Endothelial cell of umbilical vein (primary cell): ENCODE measurements at regions of chr10 and their contacts with region 1.

Region 1: DNA sequence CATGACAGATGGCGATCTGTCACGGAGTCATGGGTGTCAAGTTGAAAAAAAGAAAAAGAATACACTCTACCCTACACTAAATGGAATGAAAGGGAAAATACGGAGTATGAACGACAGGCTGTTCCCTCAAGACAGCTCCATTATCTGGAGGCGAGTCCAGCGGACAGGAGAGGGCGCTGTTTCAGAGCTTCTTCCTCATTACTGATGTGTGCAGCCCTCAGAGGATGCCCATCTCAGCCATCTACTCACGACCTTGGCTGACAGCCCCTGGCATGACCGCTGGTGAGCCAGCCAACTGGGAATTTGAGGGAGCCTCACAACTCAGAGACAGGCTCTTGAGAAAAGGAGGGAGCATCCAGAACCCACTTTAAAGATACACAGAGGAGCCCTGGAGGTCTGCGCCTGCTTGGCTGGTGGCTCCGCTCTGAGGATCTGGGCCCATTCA is 49.6 kb upstream of the SMNDC1 start:
- DNase-seq: peak; percentile 86
- H3K4me3 ChIP-seq: no peak overlapping the region
- H3K27ac ChIP-seq: peak overlapping the region; percentile 34
- H3K4me1 ChIP-seq: peaks cover 24% of the 10 kb centered on the region
- H3K27me3 ChIP-seq: no peaks in the 10 kb centered on the region
- CTCF ChIP-seq: peak; percentile 84 to 96
- POLR2A ChIP-seq: no peak

Region 2: GRCh38 chr10:110129490-110129889 is 224.9 kb before region 1 on chr10:
- CTCF ChIA-PET with region 1: no interaction called
- POLR2A ChIA-PET with region 1: no interaction called
- dilution Hi-C with region 1: no loop called
- intact Hi-C with region 1: no loop called
- DNase-seq: no peak
- H3K4me3 ChIP-seq: no peak overlapping the region
- H3K27ac ChIP-seq: no peak overlapping the region
- H3K4me1 ChIP-seq: no peaks in the 10 kb centered on the region
- H3K27me3 ChIP-seq: no peaks in the 10 kb centered on the region
- CTCF ChIP-seq: no peak
- POLR2A ChIP-seq: no peak

Region 3: GRCh38 chr10:110210674-110211464 is 143.5 kb before region 1 on chr10:
- CTCF ChIA-PET with region 1: no interaction called
- POLR2A ChIA-PET with region 1: no interaction called
- dilution Hi-C with region 1: no loop called
- intact Hi-C with region 1: no loop called
- DNase-seq: peak; percentile 99
- H3K4me3 ChIP-seq: peak overlapping the region; percentile 48 to 68 (median 57)
- H3K27ac ChIP-seq: no peak overlapping the region
- H3K4me1 ChIP-seq: peaks cover 4% of the 10 kb centered on the region
- H3K27me3 ChIP-seq: peaks cover 21 to 29% of the 10 kb centered on the region in 2 experiments
- CTCF ChIP-seq: no peak
- POLR2A ChIP-seq: no peak

Region 4: DNA sequence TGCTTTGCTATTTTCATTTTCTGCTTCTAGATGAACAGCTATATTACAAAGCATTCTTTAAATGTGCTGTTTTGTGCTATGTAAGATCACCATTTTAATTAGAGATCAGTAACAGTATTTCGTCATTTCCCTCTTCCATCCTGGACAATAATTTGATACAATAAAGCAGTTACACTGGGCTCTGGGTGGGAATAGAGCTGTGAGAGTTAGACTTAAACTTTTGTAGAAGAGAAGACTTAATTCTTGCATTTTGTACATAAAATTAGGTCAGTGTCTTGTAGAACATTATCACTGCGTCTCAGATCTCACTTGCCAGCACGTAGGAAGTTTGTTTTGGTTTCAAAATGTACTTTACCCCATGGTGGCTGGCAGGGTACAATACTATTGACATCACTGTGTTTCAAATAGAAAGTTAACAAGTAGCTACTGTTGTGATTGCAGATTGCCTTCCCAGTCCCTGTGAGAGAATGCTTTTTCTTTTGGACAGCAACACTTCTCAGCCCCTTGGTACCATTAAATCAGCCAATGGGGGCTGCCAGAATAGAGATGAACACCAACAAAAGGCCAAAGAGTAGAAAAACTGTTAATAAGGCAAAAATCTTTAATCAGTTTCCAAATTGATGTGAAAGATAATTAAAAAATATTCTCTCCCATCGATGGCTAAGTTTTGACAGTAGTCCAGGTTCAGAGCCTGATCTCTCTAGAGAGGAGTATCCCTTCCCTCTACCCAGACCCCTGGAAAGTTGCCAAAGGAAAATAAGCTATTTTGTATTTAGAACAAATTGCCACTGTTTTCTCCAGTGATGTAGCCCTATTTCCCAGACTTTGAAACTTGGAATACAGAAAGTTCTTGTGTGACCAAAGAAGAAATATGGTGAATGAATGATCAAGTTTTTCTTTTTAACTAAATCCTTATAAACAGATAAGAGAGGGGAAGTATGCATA is 84.7 kb before region 1 on chr10:
- CTCF ChIA-PET with region 1: no interaction called
- POLR2A ChIA-PET with region 1: no interaction called
- dilution Hi-C with region 1: no loop called
- intact Hi-C with region 1: no loop called
- DNase-seq: no peak
- H3K4me3 ChIP-seq: no peak overlapping the region
- H3K27ac ChIP-seq: no peak overlapping the region
- H3K4me1 ChIP-seq: no peaks in the 10 kb centered on the region
- H3K27me3 ChIP-seq: no peaks in the 10 kb centered on the region
- CTCF ChIP-seq: no peak
- POLR2A ChIP-seq: no peak

Region 5: GRCh38 chr10:110326351-110327032 is 27.9 kb before region 1 on chr10:
- CTCF ChIA-PET with region 1: interaction called, 39 read pairs
- POLR2A ChIA-PET with region 1: no interaction called
- dilution Hi-C with region 1: no loop called
- intact Hi-C with region 1: no loop called
- DNase-seq: peak; percentile 37
- H3K4me3 ChIP-seq: no peak overlapping the region
- H3K27ac ChIP-seq: peak overlapping the region; percentile 67
- H3K4me1 ChIP-seq: peaks cover 21% of the 10 kb centered on the region
- H3K27me3 ChIP-seq: no peaks in the 10 kb centered on the region
- CTCF ChIP-seq: no peak
- POLR2A ChIP-seq: no peak

Region 6: DNA sequence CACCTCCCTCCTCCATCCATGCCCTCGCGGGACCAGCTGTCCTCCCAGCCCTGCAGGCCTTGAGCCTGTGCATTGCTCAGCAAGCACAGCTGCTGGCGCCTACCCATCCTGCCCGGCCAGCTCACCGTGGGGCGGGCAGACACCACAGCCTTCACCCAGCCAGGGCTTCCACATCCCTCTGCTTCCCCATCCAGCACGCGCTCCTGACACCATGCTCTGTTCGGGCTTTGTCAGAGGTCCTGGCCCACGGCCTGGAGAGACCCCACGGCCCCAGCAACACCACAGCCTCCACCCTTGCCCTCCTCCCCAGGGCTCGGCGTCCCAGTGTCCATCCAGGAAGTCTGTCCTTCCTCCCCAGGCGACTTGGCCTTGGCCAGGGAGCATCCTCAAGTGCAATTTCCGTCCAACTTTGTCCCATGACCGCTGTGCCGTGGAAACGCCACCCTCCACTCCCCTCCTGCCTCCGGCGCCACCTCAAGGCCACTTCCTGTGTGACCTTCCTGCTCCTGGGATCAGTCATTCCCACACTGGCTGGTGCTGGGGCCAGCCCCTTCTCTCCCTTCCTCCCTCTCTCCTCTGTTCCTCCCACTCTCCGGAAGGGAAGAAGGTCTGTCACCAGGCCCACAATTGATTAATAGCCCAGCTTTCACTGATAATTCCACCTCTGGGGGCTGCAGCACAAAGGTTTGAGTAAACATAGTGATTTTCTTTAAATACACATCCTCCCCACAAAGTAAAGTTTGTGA is 21.9 kb after region 1 on chr10:
- CTCF ChIA-PET with region 1: interaction called, 14 read pairs
- POLR2A ChIA-PET with region 1: no interaction called
- dilution Hi-C with region 1: no loop called
- intact Hi-C with region 1: loop called (anchors 2 kb)
- DNase-seq: peak; percentile 55
- H3K4me3 ChIP-seq: no peak overlapping the region
- H3K27ac ChIP-seq: peak overlapping the region; percentile 31
- H3K4me1 ChIP-seq: peaks cover 36% of the 10 kb centered on the region
- H3K27me3 ChIP-seq: no peaks in the 10 kb centered on the region
- CTCF ChIP-seq: no peak
- POLR2A ChIP-seq: no peak

Region 7: DNA sequence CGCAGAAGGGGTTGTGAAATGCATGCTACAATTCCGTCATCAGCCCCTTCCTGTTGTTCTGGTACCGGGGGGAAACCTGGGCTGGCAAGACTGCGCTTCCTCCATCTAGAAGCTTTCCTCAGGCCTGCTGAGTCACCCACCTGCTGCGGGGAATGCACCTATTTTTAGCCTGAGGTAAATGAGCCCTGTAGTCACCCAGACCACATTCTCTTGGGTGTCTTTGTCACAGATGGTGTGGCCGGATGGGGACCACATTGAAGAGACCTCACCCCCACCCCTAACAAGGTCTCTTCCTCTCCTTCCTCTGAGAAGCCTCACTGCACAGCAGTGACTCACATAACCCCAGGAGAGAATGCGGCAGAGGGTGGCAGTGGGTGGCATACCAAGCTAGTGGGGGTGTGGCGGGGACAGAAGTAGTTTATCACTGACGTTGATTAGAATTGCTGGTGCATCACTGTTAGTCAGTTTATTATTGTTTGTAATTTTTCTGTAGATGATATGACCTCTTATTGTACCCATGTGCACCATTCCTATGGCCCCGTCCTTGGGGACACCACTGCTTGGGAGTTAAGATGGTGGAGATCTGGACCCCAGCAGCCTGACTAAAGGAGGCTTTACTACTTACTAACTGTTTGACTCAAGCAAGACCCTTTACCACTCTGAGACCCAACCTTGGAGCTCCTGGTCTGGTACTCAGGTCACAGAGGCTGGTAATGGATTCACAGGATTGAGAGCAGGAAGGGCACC is 60.4 kb after region 1 on chr10:
- CTCF ChIA-PET with region 1: interaction called, 49 read pairs
- POLR2A ChIA-PET with region 1: interaction called, 3 read pairs
- dilution Hi-C with region 1: no loop called
- intact Hi-C with region 1: loop called (anchors 1 kb)
- DNase-seq: no peak
- H3K4me3 ChIP-seq: no peak overlapping the region
- H3K27ac ChIP-seq: peak overlapping the region; percentile 8
- H3K4me1 ChIP-seq: peaks cover 39% of the 10 kb centered on the region
- H3K27me3 ChIP-seq: no peaks in the 10 kb centered on the region
- CTCF ChIP-seq: no peak
- POLR2A ChIP-seq: no peak

Region 8: DNA sequence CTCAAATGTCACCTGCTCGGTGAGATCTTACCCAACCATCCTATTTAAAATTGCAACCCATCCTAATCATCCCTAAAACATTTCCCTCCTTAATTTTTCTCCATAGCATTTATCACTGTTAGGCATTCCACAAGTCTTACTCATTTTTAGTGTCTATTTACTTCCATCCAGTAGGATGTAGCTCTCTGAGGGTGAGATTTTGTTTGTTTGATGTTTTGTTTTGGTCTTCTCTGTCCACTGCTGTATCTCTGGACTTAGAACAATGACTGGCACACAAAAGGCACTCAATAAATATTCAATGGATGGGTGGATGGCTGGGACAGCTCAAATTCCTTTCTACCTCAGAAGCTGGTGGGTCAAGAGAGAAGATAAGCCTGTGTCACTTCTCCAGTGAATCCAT is 127.6 kb after region 1 on chr10:
- CTCF ChIA-PET with region 1: interaction called, 15 read pairs
- POLR2A ChIA-PET with region 1: no interaction called
- dilution Hi-C with region 1: no loop called
- intact Hi-C with region 1: no loop called
- DNase-seq: no peak
- H3K4me3 ChIP-seq: no peak overlapping the region
- H3K27ac ChIP-seq: no peak overlapping the region
- H3K4me1 ChIP-seq: peaks cover 6% of the 10 kb centered on the region
- H3K27me3 ChIP-seq: no peaks in the 10 kb centered on the region
- CTCF ChIP-seq: no peak
- POLR2A ChIP-seq: no peak

Region 9: DNA sequence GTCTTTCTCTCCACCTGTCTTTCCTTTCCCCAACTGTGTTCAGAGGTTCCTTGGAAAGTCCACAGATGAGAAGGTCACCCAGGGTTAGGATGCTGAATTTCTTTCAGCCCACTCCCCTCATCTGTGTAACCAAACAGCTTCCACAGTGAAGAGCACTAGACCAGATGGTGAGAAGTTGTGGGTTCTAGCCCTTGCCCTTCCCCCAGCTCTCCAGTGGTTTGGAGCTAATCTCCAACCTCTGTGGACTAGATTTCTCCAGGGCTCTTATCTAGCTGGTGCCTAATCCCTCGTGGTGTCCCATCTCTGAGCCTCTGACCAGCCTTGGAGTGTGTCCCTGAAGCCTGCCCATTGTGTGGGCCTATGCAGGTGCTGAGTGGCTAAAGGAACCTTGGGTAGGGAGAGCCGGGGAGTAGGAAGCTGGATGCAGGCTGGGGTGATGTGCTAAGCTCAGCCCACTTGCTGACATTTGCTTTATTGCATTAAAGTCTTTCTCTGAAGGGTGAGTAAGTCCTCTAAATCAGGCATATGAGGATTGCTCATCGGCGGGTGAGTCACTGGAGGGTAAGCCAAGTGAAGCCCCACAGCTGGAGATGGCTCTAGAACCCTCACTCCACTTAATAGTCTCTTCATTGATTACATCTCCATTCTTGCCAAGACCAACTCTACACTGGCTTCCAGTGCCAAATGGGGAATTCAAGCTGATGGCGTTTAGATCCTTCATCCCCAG is 158.3 kb after region 1 on chr10:
- CTCF ChIA-PET with region 1: interaction called, 19 read pairs
- POLR2A ChIA-PET with region 1: interaction called, 5 read pairs
- dilution Hi-C with region 1: no loop called
- intact Hi-C with region 1: no loop called
- DNase-seq: peak; percentile 70
- H3K4me3 ChIP-seq: no peak overlapping the region
- H3K27ac ChIP-seq: peak overlapping the region; percentile 94
- H3K4me1 ChIP-seq: peaks cover 39% of the 10 kb centered on the region
- H3K27me3 ChIP-seq: no peaks in the 10 kb centered on the region
- CTCF ChIP-seq: no peak
- POLR2A ChIP-seq: no peak

Region 10: DNA sequence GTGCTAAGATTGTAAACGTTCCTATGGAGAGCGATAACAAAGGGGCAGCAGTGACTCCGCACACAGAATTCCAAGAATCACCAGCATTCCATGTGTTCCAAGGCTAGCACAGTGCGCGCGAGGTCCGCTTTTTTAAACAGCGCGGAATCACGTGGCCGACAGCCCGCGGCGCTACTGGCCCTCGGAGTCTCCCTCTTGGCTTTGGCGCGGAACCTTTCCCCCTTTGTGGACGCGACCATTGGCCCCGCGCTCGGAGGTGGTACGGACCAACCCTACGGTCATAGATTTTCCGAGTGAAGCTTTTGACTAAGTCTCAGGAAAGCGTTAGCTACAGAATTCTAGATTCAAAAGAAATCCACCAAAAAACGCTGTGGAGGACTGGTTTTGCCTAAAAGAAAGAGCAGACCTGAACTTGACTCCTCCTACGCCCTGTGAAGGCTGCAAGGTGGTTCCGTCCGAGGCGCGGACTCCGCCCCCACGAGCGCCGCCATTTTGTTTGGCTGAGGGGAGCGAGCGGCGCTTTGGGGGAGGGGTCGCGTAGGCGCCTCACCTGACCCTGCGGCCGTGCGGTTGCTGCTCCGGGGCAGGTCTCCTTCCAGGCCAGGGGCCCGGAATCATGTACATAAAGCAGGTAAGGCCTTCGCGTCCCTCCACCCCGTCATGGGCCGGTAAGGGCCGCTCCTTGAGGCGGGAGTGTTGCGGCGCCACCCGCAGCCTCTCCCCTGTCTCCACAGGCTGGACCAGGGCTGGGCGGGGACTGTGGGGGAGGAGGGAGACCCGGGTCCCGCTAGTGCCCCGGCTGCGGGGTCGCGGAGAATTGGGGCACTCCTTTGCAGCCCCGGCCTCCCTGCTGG is 213.1 kb after region 1 on chr10 and contains the start of gene SMC3:
- CTCF ChIA-PET with region 1: interaction called, 4 read pairs
- POLR2A ChIA-PET with region 1: no interaction called
- dilution Hi-C with region 1: loop called (anchors 10 kb)
- intact Hi-C with region 1: no loop called
- DNase-seq: peak; percentile 96
- H3K4me3 ChIP-seq: peak within 1 kb of the TSS; percentile 65 to 95 (median 90)
- H3K27ac ChIP-seq: peak within 1 kb of the TSS; percentile 96
- H3K4me1 ChIP-seq: peaks cover 14% of the 10 kb centered on the region
- H3K27me3 ChIP-seq: peaks cover 0 to 1% of the 10 kb centered on the region in 2 experiments
- CTCF ChIP-seq: no peak
- POLR2A ChIP-seq: peak; percentile 61
- total RNA-seq, gene SMC3: 44.2 and 45.0 TPM in 2 replicates

Region 11: GRCh38 chr10:110610308-110610774 is 256.0 kb after region 1 on chr10:
- CTCF ChIA-PET with region 1: no interaction called
- POLR2A ChIA-PET with region 1: no interaction called
- dilution Hi-C with region 1: no loop called
- intact Hi-C with region 1: no loop called
- DNase-seq: peak; percentile 58
- H3K4me3 ChIP-seq: no peak overlapping the region
- H3K27ac ChIP-seq: no peak overlapping the region
- H3K4me1 ChIP-seq: no peaks in the 10 kb centered on the region
- H3K27me3 ChIP-seq: peaks cover 6 to 10% of the 10 kb centered on the region in 2 experiments
- CTCF ChIP-seq: peak; percentile 68 to 71
- POLR2A ChIP-seq: no peak